Naive thymus-derived CD4-positive, alpha-beta T cell (primary cell): ENCODE measurements at regions of chr6 and their contacts with region 1.

Region 1: GRCh38 chr6:37516076-37516919 is 16.6 kb upstream of the CCDC167 start:
- DNase-seq: peak; percentile 60 to 98 (median 89)
- ATAC-seq: peak; percentile 90
- H3K4me3 ChIP-seq: peak overlapping the region; percentile 55
- H3K4me3 Mint-ChIP-seq: peak overlapping the region; percentile 75 to 93 (median 84)
- H3K27ac ChIP-seq: peak overlapping the region; percentile 97
- H3K27ac Mint-ChIP-seq: peak overlapping the region; percentile 92 to 99 (median 97)
- H3K4me1 ChIP-seq: peaks cover 76 to 84% of the 10 kb centered on the region in 2 donors
- H3K4me1 Mint-ChIP-seq: peaks cover 51 to 89% (median 81%) of the 10 kb centered on the region in 7 donors
- H3K27me3 ChIP-seq: no peaks in the 10 kb centered on the region
- H3K27me3 Mint-ChIP-seq: no peaks in the 10 kb centered on the region

Region 2: DNA sequence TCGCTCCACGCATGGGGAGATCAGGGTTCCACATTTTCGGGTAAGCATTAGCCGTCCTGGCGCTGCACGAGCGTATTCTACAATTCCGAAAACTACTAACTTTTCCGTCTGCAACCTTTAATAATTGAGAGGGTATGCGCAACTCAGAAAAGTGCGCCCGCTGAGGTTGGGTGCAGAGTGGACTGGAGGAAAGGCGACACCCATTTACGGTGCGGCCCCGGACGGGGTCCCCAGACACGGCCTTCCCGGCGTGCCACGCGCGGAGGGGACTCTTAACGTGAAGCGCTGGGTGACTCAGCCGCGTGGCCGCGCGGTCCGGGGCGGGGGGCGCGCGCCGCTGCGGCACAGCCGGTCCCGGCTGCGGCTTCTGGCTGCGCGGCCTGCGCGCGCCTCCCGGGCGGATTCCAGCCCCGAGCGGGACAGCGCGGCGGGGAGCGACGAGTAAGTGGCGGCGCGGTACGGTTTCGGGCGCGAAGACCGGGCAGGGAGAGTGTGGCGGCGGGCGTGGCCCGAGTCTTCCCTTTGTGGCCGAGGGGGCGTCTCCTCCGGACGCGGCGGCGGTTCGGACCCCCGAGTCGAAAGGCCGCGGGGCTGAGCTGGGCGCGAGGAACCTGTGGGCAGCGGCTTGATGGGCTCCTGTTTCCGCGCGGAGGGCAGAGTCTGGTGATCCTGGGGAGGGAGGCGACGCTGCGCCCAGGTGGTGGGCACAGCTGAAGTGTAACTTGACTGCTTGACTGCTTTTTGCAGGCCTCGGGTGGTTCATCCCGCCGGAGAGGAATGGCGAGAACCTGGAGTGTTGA is 1073.4 kb before region 1 on chr6 and contains the starts of genes KCTD20 and PXT1:
- CTCF ChIA-PET with region 1: no interaction called
- POLR2A ChIA-PET with region 1: no interaction called
- intact Hi-C with region 1: loop called in 1 of 2 experiments (anchors 10 kb)
- DNase-seq: peak; percentile 78 to 89 (median 83)
- ATAC-seq: peak; percentile 91
- H3K4me3 ChIP-seq: peak within 1 kb of the TSS; percentile 69
- H3K4me3 Mint-ChIP-seq: peak within 1 kb of the TSS; percentile 85 to 99 (median 96)
- H3K27ac ChIP-seq: peak within 1 kb of the TSS; percentile 97
- H3K27ac Mint-ChIP-seq: peak within 1 kb of the TSS; percentile 92 to 99 (median 97)
- H3K4me1 ChIP-seq: peaks cover 20 to 31% of the 10 kb centered on the region in 2 donors
- H3K4me1 Mint-ChIP-seq: peaks cover 28 to 56% (median 50%) of the 10 kb centered on the region in 7 donors
- H3K27me3 ChIP-seq: no peaks in the 10 kb centered on the region
- H3K27me3 Mint-ChIP-seq: no peaks in the 10 kb centered on the region
- total RNA-seq, gene KCTD20: 33.0 to 55.8 (median 33.2) TPM
- total RNA-seq, gene PXT1: 0.15 to 0.64 (median 0.32) TPM

Region 3: DNA sequence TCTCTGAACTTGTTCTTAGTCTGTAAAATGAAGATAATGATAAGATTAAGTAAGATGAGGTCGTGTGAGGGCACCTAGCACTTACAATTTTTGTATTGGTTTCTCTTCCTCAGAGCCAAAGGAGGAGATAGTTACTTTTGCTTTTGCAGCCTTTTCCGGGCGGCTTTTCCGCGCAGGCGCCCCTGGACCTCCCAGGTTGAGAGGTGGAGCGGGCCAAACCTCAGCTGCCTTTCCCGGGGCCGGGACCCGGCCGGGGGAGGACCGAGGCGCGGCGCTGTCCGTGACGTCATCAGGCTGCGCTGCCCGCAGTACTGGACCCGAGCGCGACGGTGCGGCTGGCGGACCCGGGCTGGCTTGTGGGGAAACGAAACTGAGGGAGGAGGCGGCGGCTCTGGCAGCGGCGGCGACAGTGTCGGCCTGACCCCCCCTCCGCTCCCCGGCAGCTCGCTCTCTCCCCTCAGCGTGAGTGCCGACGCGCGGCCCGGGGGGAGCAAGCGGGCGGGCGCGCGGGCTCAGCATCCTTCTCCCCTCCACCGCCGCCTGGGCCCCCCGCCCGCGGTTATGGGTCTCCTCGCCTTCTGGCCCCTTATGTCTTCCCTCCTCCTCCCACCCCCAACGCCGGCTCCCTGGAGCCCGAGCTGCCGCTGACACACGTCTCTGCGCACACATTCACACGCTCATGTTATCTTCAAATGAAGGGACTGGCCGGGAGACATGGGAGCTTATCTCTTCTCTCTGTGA is 83.2 kb before region 1 on chr6 and contains the start of gene CMTR1:
- CTCF ChIA-PET with region 1: no interaction called
- POLR2A ChIA-PET with region 1: interaction called, 11 read pairs
- intact Hi-C with region 1: loop called (anchors 1 kb)
- DNase-seq: peak; percentile 94 to 99 (median 95)
- ATAC-seq: peak; percentile 96
- H3K4me3 ChIP-seq: peak within 1 kb of the TSS; percentile 64
- H3K4me3 Mint-ChIP-seq: peak within 1 kb of the TSS; percentile 83 to 96 (median 94)
- H3K27ac ChIP-seq: peak within 1 kb of the TSS; percentile 94
- H3K27ac Mint-ChIP-seq: peak within 1 kb of the TSS; percentile 92 to 97 (median 96)
- H3K4me1 ChIP-seq: peaks cover 12 to 25% of the 10 kb centered on the region in 2 donors
- H3K4me1 Mint-ChIP-seq: peaks cover 24 to 55% (median 47%) of the 10 kb centered on the region in 7 donors
- H3K27me3 ChIP-seq: no peaks in the 10 kb centered on the region
- H3K27me3 Mint-ChIP-seq: peaks cover 2 to 9% (median 8%) of the 10 kb centered on the region in 5 donors
- total RNA-seq, gene CMTR1: 70.0 to 89.4 (median 71.8) TPM

Region 4: GRCh38 chr6:37463110-37463509 is 53.2 kb before region 1 on chr6:
- CTCF ChIA-PET with region 1: no interaction called
- POLR2A ChIA-PET with region 1: no interaction called
- intact Hi-C with region 1: no loop called
- DNase-seq: no peak
- ATAC-seq: no peak
- H3K4me3 ChIP-seq: no peak overlapping the region
- H3K4me3 Mint-ChIP-seq: no peak overlapping the region
- H3K27ac ChIP-seq: no peak overlapping the region
- H3K27ac Mint-ChIP-seq: peak overlapping the region in 4 of 9 donors; percentile 12 to 56 (median 31)
- H3K4me1 ChIP-seq: no peaks in the 10 kb centered on the region
- H3K4me1 Mint-ChIP-seq: peaks cover 0 to 2% (median 0%) of the 10 kb centered on the region in 7 donors
- H3K27me3 ChIP-seq: no peaks in the 10 kb centered on the region
- H3K27me3 Mint-ChIP-seq: no peaks in the 10 kb centered on the region

Region 5: DNA sequence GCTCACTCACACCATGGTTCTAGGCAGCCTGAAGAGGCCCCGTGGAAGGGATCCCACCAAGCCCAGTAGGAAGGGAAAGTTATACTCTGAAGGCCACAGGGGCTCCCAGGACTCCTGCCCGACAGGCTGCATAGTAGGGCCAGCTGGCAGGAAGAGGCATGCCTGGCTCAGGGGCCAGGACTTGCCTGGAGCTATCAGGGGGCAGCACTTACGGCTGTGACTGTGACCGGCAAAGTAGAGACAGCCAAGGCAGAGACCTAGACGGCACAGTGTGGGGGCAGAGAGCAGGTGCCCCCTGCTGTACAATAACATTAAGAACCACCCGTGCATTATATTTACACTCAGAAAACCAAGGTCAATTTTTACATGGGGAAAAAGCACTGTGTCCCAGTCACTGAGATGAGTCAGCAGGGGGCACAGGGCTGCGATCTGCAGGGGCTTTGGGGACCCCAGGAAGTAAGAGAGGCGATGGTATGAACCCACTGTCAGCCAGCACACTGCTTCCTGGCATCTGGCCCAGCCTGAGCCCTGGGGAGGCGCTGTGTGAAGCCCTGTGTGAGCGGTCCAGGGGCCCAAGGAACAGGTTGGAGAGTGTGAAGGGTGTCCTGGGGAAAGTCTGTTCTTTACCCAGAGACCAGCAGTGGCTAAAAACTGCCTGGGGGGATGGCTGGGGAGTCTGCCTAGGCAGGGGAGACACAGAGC is 26.5 kb before region 1 on chr6:
- CTCF ChIA-PET with region 1: interaction called, 20 read pairs
- POLR2A ChIA-PET with region 1: interaction called, 376 read pairs
- intact Hi-C with region 1: no loop called
- DNase-seq: peak in 1 of 9 donors; percentile 12
- ATAC-seq: peak; percentile 63
- H3K4me3 ChIP-seq: no peak overlapping the region
- H3K4me3 Mint-ChIP-seq: peak overlapping the region in 7 of 10 donors; percentile 0 to 64 (median 18)
- H3K27ac ChIP-seq: peak overlapping the region; percentile 10
- H3K27ac Mint-ChIP-seq: peak overlapping the region; percentile 79 to 91 (median 87)
- H3K4me1 ChIP-seq: peaks cover 40 to 46% of the 10 kb centered on the region in 2 donors
- H3K4me1 Mint-ChIP-seq: peaks cover 32 to 80% (median 65%) of the 10 kb centered on the region in 7 donors
- H3K27me3 ChIP-seq: no peaks in the 10 kb centered on the region
- H3K27me3 Mint-ChIP-seq: no peaks in the 10 kb centered on the region

Region 6: DNA sequence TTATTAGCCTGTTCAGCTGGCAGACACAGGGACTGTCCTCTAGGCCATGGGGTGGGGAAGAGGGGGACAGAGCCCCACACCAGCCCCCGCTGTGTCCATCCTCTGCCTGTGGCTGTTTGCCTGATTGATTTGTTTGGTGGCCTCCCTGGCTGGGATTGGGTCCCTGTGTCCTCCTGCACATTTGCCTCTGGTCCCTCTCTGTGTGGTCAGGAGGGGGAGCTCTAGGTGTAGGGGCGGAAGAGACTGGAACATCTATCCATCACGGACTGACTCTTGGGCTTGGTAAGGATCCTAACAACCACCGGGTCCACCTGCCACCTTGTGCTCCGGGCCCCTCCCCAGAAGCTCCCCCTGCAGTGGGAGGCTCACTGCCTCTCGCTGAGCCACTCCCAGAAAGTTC is 21.8 kb after region 1 on chr6:
- CTCF ChIA-PET with region 1: interaction called, 7 read pairs
- POLR2A ChIA-PET with region 1: interaction called, 8 read pairs
- intact Hi-C with region 1: loop called in 1 of 2 experiments (anchors 1 kb)
- DNase-seq: no peak
- ATAC-seq: no peak
- H3K4me3 ChIP-seq: no peak overlapping the region
- H3K4me3 Mint-ChIP-seq: peak overlapping the region in 2 of 10 donors; percentile 19 to 27
- H3K27ac ChIP-seq: no peak overlapping the region
- H3K27ac Mint-ChIP-seq: peak overlapping the region in 5 of 9 donors; percentile 22 to 69 (median 46)
- H3K4me1 ChIP-seq: peaks cover 0 to 18% of the 10 kb centered on the region in 2 donors
- H3K4me1 Mint-ChIP-seq: peaks cover 3 to 36% (median 13%) of the 10 kb centered on the region in 7 donors
- H3K27me3 ChIP-seq: no peaks in the 10 kb centered on the region
- H3K27me3 Mint-ChIP-seq: peaks cover 0 to 48% (median 0%) of the 10 kb centered on the region in 5 donors

Region 7: DNA sequence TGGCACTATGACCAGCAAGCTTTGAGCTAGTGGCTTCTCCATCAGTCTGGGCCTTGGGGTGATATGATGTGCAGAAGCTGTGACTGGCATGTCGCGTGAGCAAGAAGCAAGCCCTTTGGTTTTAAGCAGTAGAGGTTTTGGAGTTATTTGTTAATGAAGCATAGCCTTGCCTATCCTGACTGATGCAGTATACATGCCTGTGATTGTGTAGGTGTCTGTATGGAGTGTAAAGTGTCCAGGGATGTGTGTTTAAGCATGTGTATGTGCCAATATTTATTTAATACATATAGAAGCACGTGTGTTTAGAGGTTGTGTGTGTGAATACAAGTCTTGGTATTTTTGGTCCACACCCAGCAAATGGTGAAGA is 44.4 kb after region 1 on chr6:
- CTCF ChIA-PET with region 1: interaction called, 12 read pairs
- POLR2A ChIA-PET with region 1: interaction called, 7 read pairs
- intact Hi-C with region 1: loop called in 1 of 2 experiments (anchors 1 kb)
- DNase-seq: no peak
- ATAC-seq: no peak
- H3K4me3 ChIP-seq: no peak overlapping the region
- H3K4me3 Mint-ChIP-seq: peak overlapping the region in 1 of 10 donors; percentile 57
- H3K27ac ChIP-seq: no peak overlapping the region
- H3K27ac Mint-ChIP-seq: peak overlapping the region in 4 of 9 donors; percentile 34 to 82 (median 68)
- H3K4me1 ChIP-seq: peaks cover 7 to 18% of the 10 kb centered on the region in 2 donors
- H3K4me1 Mint-ChIP-seq: peaks cover 0 to 33% (median 26%) of the 10 kb centered on the region in 7 donors
- H3K27me3 ChIP-seq: no peaks in the 10 kb centered on the region
- H3K27me3 Mint-ChIP-seq: peaks cover 0 to 33% (median 0%) of the 10 kb centered on the region in 5 donors

Region 8: DNA sequence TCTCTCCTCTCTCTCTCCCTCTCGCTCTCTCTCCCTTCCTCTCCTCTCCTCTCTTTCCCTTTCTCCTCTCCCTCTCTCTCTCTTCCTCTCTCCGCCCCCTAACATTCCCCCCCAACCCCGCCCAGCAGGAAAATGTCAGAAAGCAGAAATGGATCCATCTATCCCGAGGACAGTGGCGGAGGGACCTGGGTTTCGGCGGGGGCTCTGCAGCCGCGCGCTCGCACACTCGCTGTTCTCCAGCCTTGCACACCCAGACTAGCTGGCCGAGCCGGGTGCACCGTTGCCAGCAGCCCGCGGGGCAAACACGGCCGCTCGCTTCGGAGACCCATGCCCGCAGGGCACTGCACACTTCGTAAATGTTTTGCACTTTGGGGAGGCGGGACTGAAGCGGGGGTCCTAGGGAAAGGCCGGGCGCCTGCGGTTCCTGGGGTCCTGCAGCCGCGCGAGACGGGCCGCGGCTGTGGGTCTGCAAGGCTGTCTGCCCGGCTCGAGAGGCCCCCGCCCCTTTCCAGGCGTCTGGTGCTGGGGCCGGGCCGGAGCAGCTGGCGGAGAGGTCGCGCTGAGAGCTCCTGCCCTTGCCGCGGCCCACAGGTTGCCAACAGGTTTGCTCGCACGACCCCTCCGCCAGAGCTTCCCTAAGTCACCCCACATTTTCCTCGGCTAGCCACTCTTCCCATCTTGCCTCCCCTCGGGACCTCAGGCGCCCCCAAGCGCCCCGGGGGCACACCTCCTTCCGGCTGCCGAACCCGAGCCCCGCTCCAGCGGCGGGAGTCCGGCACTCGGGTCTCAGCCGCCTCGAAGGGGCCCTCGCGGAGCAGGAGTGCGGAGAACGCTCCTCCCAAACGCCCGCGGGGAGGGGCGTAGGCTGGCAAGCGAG is 182.2 kb after region 1 on chr6:
- CTCF ChIA-PET with region 1: no interaction called
- POLR2A ChIA-PET with region 1: interaction called, 12 read pairs
- intact Hi-C with region 1: loop called in 1 of 2 experiments (anchors 1 kb)
- DNase-seq: peak; percentile 33 to 69 (median 57)
- ATAC-seq: peak; percentile 23
- H3K4me3 ChIP-seq: peak overlapping the region; percentile 79
- H3K4me3 Mint-ChIP-seq: peak overlapping the region; percentile 96 to 100 (median 98)
- H3K27ac ChIP-seq: peak overlapping the region; percentile 57
- H3K27ac Mint-ChIP-seq: peak overlapping the region; percentile 93 to 99 (median 98)
- H3K4me1 ChIP-seq: peaks cover 11 to 12% of the 10 kb centered on the region in 2 donors
- H3K4me1 Mint-ChIP-seq: peaks cover 20 to 36% (median 26%) of the 10 kb centered on the region in 7 donors
- H3K27me3 ChIP-seq: no peaks in the 10 kb centered on the region
- H3K27me3 Mint-ChIP-seq: peaks cover 25 to 81% (median 38%) of the 10 kb centered on the region in 5 donors